ENCODE measurements at regions of chr19 and their contacts with region 1.

Region 1: DNA sequence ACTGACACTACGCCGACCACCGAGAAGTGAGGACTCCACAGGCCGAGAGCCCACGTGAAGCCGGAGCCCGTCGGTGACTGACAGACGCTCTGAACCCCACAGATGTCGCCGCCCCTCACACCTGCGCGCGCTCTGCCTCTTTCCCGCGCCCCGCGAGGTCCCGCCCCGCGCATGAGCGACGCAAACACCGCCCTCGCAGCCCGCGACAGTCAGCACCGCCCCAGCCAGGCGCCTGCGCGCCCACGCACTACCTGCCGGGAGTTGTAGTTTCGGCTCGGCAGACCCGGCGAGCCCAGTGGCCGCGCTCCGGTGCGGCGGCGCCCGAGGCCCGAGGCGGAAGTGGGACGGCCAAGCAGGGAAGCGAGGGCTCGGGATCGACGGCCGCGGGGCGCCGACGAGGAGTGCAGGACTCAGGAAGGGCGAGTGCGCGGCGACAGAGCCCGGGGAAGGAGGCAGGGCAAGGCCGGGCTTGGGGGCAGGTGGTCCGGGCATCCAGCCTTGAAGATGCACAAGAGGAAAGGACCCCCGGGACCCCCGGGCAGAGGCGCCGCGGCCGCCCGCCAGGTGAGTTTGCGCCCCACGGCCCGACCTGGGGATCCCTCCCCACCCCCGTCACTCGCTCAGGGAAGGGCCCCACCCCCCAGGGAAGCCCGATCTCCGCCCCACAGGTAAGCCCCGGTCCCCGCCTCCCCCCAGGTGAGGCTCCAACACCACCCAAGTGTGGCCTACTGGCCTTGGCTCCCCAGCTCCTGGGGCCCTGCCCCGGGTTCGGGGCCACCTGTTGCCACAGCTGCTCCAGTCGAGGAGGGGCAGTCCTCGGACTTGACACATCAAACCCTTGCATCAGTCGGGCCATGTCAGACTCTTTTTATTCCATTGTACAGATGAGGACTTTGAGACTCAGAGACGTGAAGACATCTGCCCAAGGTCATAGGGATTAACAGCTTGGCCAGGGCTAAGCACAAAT is at the starts of genes BRME1 and CC2D1A:
- DNase-seq: peak; percentile 99
- ATAC-seq: peak; percentile 97
- H3K4me3 Mint-ChIP-seq: peak within 1 kb of the TSS; percentile 75
- H3K27ac Mint-ChIP-seq: peak within 1 kb of the TSS; percentile 93
- H3K4me1 Mint-ChIP-seq: peaks cover 14% of the 10 kb centered on the region
- H3K27me3 Mint-ChIP-seq: no peaks in the 10 kb centered on the region
- total RNA-seq, gene BRME1: 5.3 to 5.5 TPM
- total RNA-seq, gene CC2D1A: 30.2 to 34.3 TPM

Region 2: DNA sequence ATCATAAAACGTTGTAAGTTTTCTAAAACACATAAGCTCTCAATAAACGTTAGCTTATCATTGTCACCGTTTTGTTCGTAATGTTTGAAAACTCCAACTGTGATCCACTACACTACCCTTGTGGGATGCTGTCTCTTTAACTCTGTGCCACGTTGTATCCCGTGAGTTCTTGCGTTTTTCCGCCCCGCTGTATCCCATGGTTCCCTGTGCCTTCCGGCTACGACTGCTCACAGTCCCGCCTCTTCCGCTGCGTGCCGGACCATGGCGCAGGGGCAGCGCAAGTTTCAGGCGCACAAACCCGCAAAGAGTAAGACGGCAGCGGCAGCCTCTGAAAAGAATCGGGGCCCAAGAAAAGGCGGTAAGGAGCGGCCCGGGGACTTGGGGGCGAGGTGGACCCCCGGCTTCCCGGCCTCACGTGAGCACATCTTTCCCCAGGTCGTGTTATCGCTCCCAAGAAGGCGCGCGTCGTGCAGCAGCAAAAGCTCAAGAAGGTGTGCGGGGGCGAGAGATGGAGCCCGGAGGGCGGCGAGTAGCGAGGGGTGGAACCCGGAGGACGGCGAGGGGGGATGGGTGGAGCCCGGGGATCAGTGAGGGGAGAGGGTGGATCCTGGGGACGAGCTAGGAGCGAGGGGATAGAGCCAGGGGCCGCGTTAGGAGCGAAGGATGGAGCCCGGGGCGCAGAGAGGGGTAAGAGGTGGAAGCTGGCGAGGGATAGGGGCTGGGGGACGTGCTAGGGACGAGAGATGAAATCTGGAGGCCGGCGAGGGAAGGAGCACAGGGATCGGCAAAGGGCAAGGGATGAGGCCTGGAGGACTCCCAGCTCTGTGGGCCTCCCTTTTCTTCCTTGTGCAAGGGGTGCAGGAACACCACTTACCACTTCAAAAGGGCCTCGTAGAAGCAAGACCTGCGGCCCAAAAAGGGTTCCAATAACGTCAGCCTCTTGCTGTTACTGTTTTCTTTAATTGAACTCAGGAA is 131.7 kb before region 1 on chr19 and contains the start of gene C19orf53:
- CTCF ChIA-PET with region 1: no interaction called
- POLR2A ChIA-PET with region 1: no interaction called
- intact Hi-C with region 1: no loop called
- DNase-seq: peak; percentile 94
- ATAC-seq: peak; percentile 100
- H3K4me3 Mint-ChIP-seq: peak within 1 kb of the TSS; percentile 100
- H3K27ac Mint-ChIP-seq: peak within 1 kb of the TSS; percentile 95
- H3K4me1 Mint-ChIP-seq: peaks cover 17% of the 10 kb centered on the region
- H3K27me3 Mint-ChIP-seq: no peaks in the 10 kb centered on the region
- total RNA-seq, gene C19orf53: 115 to 142 TPM

Region 3: DNA sequence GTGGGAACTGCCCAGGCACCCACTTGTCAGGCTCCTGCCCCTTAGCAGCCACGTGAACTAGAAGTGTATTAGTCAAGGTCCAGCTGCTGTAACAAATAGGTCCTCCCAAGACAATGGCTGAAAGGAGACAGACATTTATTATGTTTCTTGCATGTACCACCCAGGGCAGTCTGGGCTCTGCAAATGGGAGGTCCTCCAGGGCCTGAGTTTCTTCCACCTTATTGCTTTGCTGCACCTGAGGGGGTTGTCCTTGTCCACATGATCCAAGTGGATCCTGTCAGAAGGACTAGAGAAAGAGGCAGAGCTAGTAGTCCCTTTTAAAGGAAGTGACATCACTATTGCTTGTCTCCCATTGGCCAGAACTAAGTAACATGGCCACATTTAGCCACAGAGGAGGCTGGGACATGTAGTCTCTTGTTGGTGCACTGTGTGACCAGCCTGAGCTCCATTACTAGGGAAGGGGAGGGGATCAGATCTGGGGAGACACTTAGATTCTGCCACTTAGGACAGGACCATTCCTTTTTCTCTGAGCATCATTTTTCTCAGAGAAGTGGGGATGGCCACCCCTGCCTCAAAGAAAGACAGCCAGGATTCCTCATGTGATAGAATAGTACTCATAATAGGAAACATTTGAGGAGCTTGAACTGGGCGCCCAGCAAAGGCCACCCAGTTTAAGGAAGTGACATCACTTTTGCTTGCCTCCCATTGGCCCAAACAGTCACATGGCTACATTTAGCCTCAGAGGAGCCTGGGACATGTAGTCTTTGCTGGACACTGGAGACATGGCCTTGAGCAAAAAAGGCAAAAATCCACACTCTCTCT is 14.9 kb after region 1 on chr19:
- CTCF ChIA-PET with region 1: interaction called, 3 read pairs
- POLR2A ChIA-PET with region 1: no interaction called
- intact Hi-C with region 1: loop called in 1 of 2 experiments (anchors 1 kb)
- DNase-seq: peak; percentile 61
- ATAC-seq: peak; percentile 94
- H3K4me3 Mint-ChIP-seq: no peak overlapping the region
- H3K27ac Mint-ChIP-seq: peak overlapping the region; percentile 19
- H3K4me1 Mint-ChIP-seq: no peaks in the 10 kb centered on the region
- H3K27me3 Mint-ChIP-seq: no peaks in the 10 kb centered on the region

Region 4: GRCh38 chr19:13986348-13986904 is 80.2 kb after region 1 on chr19:
- CTCF ChIA-PET with region 1: interaction called, 3 read pairs
- POLR2A ChIA-PET with region 1: no interaction called
- intact Hi-C with region 1: loop called in 1 of 2 experiments (anchors 1 kb)
- DNase-seq: peak; percentile 100
- ATAC-seq: peak; percentile 92
- H3K4me3 Mint-ChIP-seq: peak overlapping the region; percentile 63
- H3K27ac Mint-ChIP-seq: peak overlapping the region; percentile 97
- H3K4me1 Mint-ChIP-seq: peaks cover 65% of the 10 kb centered on the region
- H3K27me3 Mint-ChIP-seq: no peaks in the 10 kb centered on the region

Region 5: GRCh38 chr19:14081325-14082093 is 175.3 kb after region 1 on chr19:
- CTCF ChIA-PET with region 1: interaction called, 3 read pairs
- POLR2A ChIA-PET with region 1: no interaction called
- intact Hi-C with region 1: loop called in 1 of 2 experiments (anchors 1 kb)
- DNase-seq: peak; percentile 99
- ATAC-seq: peak; percentile 95
- H3K4me3 Mint-ChIP-seq: peak overlapping the region; percentile 90
- H3K27ac Mint-ChIP-seq: peak overlapping the region; percentile 92
- H3K4me1 Mint-ChIP-seq: peaks cover 10% of the 10 kb centered on the region
- H3K27me3 Mint-ChIP-seq: no peaks in the 10 kb centered on the region

Region 6: DNA sequence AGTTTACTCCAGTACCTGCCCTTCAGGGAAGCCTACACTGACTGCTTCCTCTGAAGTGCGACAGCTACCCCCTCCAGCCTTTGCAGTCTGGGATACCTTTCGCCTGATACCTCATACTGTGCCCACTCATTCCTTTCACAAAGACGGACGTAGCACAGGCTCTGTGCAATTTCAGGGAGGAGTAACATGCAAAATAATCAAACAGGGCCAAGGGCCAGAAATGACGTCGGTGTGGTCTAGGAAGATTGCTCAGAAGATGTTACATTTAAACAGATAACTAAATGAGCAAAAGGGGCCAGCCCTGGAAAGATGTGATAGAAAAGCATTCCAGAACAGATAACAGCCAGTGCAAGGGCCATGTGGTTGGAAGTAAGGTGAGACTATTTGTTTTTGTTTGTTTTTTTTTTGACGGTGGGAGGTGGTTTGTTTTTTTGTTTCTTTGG is 519.5 kb after region 1 on chr19:
- CTCF ChIA-PET with region 1: no interaction called
- POLR2A ChIA-PET with region 1: no interaction called
- intact Hi-C with region 1: no loop called
- DNase-seq: no peak
- ATAC-seq: no peak
- H3K4me3 Mint-ChIP-seq: no peak overlapping the region
- H3K27ac Mint-ChIP-seq: no peak overlapping the region
- H3K4me1 Mint-ChIP-seq: no peaks in the 10 kb centered on the region
- H3K27me3 Mint-ChIP-seq: no peaks in the 10 kb centered on the region

Measured in activated CD4-positive, alpha-beta T cell treated with anti-CD3 and anti-CD28 coated beads for 36 hours (primary cell).